ENCODE measurements at regions of chr3 and their contacts with region 1.

Region 1: GRCh38 chr3:194472290-194472920 is 14.4 kb downstream of the ATP13A3 start:
- DNase-seq: no peak
- ATAC-seq: peak; percentile 60 to 66

Region 2: DNA sequence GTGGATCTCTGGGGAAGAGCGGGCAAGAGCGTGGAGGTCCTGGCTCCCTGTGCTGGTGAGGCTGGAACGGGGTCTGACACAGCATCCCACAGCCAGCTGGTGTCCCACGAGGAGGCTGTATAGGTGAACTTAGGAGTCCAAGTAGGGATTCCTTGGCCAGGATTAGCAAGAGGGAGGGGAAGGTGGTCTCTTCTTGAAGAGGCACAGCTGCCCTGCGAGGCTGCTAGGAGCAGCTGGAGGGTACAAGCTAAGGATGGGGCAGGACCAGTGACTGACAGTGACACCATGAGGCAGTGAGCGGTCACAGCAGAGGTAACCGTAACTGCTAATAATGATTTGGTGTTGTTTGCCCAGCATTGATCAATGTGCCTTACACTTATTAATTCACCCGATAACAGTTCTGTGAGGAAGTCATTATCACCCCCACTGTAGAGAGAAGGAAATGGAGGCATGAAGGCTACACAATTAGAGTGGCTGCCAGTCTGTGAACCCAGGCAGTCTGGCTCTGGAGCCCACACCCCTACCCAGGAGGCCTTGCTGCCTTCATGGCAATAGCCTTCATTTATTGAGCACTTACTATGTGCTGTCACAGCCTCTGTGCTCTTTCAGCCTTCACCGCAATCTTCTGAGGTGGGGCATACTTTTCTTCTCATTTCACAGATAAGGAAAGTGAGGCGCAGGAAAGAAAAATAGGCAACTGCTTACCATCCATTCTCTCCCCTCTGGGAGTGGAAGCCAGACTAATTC is 101.5 kb after region 1 on chr3:
- intact Hi-C with region 1: loop called in 1 of 2 experiments (anchors 2 kb)
- DNase-seq: peak; percentile 58
- ATAC-seq: peak; percentile 45 to 70

Region 3: GRCh38 chr3:194586836-194587235 is 114.4 kb after region 1 on chr3:
- intact Hi-C with region 1: loop called (anchors 5 kb)
- DNase-seq: no peak
- ATAC-seq: peak in 1 of 2 donors; percentile 16

Region 4: DNA sequence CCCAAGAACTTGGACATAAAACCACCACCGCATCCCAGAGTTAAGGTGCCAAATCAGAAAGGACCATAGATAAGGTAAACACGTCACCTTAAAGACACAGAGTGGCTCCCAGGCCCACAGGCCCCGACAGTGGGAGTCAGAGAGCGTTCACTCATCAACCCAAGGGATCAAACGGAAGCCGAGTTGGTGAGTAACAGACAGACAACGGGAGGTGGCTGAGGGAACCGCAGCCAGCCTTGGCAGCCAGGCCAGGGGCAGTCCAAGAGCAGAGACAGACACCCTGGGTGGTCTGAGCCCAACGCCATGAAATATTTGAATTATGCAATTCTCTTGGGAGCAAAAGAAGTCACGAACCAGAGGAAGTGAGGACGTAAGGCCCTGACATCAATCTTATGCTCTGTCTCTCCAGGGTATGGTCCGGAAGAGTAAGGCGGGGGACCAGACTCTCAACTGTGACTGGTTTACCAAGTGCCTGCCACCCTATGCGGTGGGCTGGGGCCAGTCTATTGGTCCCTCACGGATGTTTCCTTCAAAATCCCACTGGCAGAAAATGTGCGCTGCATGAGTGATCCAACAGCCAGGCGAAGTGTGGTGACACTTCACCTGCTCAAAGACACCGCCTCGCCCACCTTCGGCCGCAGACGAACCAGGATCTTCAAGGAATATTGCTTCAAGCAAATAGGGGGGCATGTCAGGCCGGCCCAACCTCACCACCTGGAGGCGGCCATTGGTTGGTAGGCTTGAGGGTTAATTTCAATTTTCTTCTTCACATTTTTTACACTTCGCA is 126.6 kb after region 1 on chr3:
- intact Hi-C with region 1: loop called in 1 of 2 experiments (anchors 5 kb)
- DNase-seq: peak; percentile 53
- ATAC-seq: peak in 1 of 2 donors; percentile 48

Measured in left cardiac atrium (tissue), 4 donors.